Motor neuron (in vitro differentiated cells): ENCODE measurements at regions of chr6 and their contacts with region 1.

Region 1: GRCh38 chr6:33014841-33015634 is 5.6 kb upstream of the HLA-DOA start:
- ATAC-seq: peak; percentile 39 to 78 (median 68)
- H3K4me3 ChIP-seq: no peak overlapping the region
- H3K27ac ChIP-seq: no peak overlapping the region
- H3K4me1 ChIP-seq: peaks cover 0 to 2% of the 10 kb centered on the region in 2 donors

Region 2: DNA sequence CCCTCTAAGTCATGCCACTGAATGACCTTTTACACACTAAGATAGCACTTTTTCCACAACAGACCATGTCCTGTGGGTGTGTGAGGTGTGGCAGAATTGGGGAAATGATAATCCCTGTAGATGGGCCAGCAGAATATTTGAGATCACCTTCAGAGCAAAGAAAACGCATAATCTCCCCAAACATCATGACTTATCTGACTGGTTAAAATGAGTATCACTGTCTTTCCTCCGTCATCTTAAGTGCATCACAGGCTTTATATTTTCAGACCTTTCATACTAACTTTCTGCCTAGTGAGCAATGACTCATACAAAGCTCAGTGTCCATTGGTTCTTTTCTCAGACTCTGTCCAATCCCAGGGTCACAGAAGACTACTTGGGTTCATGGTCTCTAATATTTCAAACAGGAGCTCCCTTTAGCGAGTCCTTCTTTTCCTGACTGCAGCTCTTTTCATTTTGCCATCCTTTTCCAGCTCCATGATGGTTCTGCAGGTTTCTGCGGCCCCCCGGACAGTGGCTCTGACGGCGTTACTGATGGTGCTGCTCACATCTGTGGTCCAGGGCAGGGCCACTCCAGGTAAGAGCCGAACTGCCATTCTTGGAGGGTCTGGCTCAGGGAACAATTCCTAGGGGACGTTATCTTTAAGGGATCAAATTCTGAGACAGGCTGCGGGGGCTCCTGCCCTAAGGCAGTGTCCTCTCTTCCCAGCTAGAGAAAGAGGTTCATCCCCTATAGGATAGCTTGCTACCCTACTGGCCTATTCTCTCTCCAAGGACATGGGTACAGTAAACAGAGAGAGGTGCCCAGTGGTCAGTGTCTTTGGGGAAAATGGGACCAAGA is 60.7 kb after region 1 on chr6 and contains the start of gene HLA-DPB1:
- in situ Hi-C with region 1: loop called in 1 of 9 experiments (anchors 5 kb)
- ATAC-seq: peak in 5 of 8 experiments; percentile 26 to 89 (median 49)
- H3K4me3 ChIP-seq: no peak within 1 kb of the TSS
- H3K27ac ChIP-seq: no peak within 1 kb of the TSS
- H3K4me1 ChIP-seq: no peaks in the 10 kb centered on the region
- total RNA-seq, gene HLA-DPB1: 0.55 to 16.5 (median 2.1) TPM

Region 3: DNA sequence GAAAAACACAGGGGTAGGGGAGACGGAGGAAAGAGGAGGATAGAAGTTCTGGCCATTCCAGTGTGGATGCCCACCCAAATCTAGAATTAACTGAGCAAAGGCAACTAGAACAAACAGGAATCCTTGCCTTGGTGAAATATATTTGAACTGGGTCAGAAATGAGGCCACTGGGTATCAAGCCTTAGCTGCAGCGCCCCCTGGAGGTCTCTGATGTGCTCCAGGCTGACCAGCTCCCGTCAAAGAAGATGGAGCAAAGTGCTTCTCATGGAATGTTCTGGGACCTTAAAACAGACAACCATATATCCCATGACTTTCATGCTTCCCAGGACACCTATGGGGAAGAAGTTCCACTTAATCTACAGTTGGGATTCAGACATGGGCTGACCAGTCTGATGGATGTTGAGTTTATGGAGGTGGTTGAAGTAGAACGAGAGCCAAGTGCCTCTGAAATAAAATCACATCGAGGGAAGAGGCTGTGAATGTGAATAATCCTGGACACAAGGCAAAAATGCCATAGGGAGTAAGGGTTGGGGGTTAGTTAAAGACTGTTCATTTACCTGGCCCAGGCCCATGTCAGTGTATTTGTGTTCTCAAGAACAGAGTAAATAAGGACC is 111.2 kb after region 1 on chr6:
- in situ Hi-C with region 1: loop called in 1 of 9 experiments (anchors 25 kb)
- ATAC-seq: peak in 3 of 8 experiments; percentile 40 to 86 (median 67)
- H3K4me3 ChIP-seq: no peak overlapping the region
- H3K27ac ChIP-seq: no peak overlapping the region
- H3K4me1 ChIP-seq: peaks cover 0 to 7% of the 10 kb centered on the region in 2 donors

Region 4: GRCh38 chr6:33248925-33249731 is 234.1 kb after region 1 on chr6:
- in situ Hi-C with region 1: loop called in 6 of 9 experiments (anchors 10 to 25 kb)
- ATAC-seq: peak; percentile 86 to 96 (median 90)
- H3K4me3 ChIP-seq: peak overlapping the region; percentile 38 to 52 (median 45)
- H3K27ac ChIP-seq: peak overlapping the region; percentile 63 to 82
- H3K4me1 ChIP-seq: peaks cover 12 to 14% of the 10 kb centered on the region in 2 donors

Region 5: GRCh38 chr6:33276864-33277662 is 262.0 kb after region 1 on chr6 and contains the start of gene B3GALT4:
- in situ Hi-C with region 1: no loop called
- ATAC-seq: peak; percentile 66 to 85 (median 82)
- H3K4me3 ChIP-seq: peak within 1 kb of the TSS; percentile 36 to 48 (median 38)
- H3K27ac ChIP-seq: peak within 1 kb of the TSS; percentile 76 to 79
- H3K4me1 ChIP-seq: peaks cover 39 to 47% of the 10 kb centered on the region in 2 donors
- total RNA-seq, gene B3GALT4: 1.5 to 6.0 (median 5.1) TPM